ENCODE measurements at regions of chr2 and their contacts with region 1.

Region 1: GRCh38 chr2:290090-290722 is 2.3 kb upstream of the ALKAL2 start:
- DNase-seq: peak; percentile 20 to 57 (median 45)
- ATAC-seq: peak; percentile 60
- H3K4me3 ChIP-seq: peak overlapping the region; percentile 55
- H3K4me3 Mint-ChIP-seq: peak overlapping the region; percentile 76 to 90 (median 84)
- H3K27ac ChIP-seq: no peak overlapping the region
- H3K27ac Mint-ChIP-seq: no peak overlapping the region
- H3K4me1 ChIP-seq: peaks cover 10 to 12% of the 10 kb centered on the region in 2 donors
- H3K4me1 Mint-ChIP-seq: peaks cover 0 to 16% (median 8%) of the 10 kb centered on the region in 7 donors
- H3K27me3 ChIP-seq: peaks cover 2 to 8% of the 10 kb centered on the region in 2 donors
- H3K27me3 Mint-ChIP-seq: peaks cover 24 to 53% (median 41%) of the 10 kb centered on the region in 5 donors

Region 2: GRCh38 chr2:246489-247144 is 43.6 kb before region 1 on chr2:
- CTCF ChIA-PET with region 1: no interaction called
- POLR2A ChIA-PET with region 1: no interaction called
- intact Hi-C with region 1: loop called (anchors 1 kb)
- DNase-seq: peak in 7 of 9 donors; percentile 21 to 57 (median 49)
- ATAC-seq: peak; percentile 57
- H3K4me3 ChIP-seq: no peak overlapping the region
- H3K4me3 Mint-ChIP-seq: no peak overlapping the region
- H3K27ac ChIP-seq: no peak overlapping the region
- H3K27ac Mint-ChIP-seq: peak overlapping the region in 3 of 9 donors; percentile 7 to 34 (median 24)
- H3K4me1 ChIP-seq: no peaks in the 10 kb centered on the region
- H3K4me1 Mint-ChIP-seq: peaks cover 4 to 9% (median 7%) of the 10 kb centered on the region in 7 donors
- H3K27me3 ChIP-seq: no peaks in the 10 kb centered on the region
- H3K27me3 Mint-ChIP-seq: no peaks in the 10 kb centered on the region